ENCODE measurements at regions of chr10 and their contacts with region 1.

Region 1: DNA sequence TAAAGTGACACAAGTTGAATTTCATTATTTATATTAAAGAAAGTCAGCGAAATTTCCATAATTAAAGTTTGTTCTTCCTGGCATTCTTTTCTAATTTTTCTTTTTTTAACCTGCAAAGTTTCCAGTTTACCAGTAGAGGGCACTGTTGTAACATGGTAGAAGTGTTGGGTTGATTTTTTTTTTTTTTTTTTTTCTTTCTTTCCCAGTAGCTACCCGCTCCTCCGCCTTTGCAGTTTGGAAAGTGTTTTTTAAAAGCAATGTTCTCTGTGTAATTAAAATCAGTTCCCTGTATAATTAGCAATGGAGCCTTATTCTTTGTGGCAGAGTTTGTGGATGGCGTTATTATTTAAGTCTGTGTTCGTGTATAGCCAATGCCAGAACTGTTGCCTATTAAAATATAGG is 53.7 kb downstream of the TAF3 start:
- DNase-seq: no peak
- ATAC-seq: no peak

Region 2: GRCh38 chr10:7818295-7819122 is 53.5 kb before region 1 on chr10 and contains the start of gene TAF3:
- intact Hi-C with region 1: no loop called
- DNase-seq: peak; percentile 97
- ATAC-seq: peak; percentile 93
- total RNA-seq, gene TAF3: 11.8 TPM

Region 3: GRCh38 chr10:8221451-8221850 is 349.4 kb after region 1 on chr10:
- intact Hi-C with region 1: loop called (anchors 10 kb)
- DNase-seq: no peak
- ATAC-seq: no peak

Region 4: GRCh38 chr10:9209105-9209798 is 1337.2 kb after region 1 on chr10:
- intact Hi-C with region 1: loop called (anchors 1 kb)
- DNase-seq: no peak
- ATAC-seq: peak; percentile 31

Region 5: DNA sequence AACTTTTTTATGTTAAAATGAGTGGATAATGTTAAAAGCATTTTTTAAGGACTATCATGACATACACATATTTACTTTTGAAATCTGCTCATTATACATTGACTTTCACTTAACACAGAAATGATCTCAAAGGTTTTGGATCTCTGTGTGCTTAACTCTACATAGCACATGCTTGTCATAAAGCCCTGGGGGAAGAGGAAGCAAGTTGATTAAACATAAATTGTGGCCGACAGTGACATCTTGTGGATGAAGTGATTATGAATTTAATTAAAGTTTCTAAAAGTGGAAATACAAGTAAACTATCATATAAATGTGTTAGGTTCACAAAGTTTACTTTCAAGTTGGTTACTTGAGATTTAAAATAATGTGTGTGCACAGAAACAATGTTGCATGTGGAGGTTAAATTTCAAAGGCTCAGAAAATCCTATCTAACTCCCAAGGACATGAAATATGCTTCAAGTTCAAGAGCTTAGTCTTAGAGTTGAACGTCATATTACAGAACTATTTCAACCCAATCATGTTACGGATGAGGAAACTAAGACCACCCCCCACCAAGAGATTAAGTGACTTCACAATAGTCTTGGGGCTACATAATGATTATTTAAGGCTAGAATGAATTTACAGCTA is 1430.2 kb after region 1 on chr10:
- intact Hi-C with region 1: loop called (anchors 10 kb)
- DNase-seq: no peak
- ATAC-seq: no peak

Measured in Right ventricle myocardium inferior (tissue), 1 donor.